ENCODE measurements at regions of chr17 and their contacts with region 1.

Region 1: GRCh38 chr17:20009302-20010098 is at the start of gene SPECC1:
- DNase-seq: peak; percentile 84
- H3K4me3 Mint-ChIP-seq: peak within 1 kb of the TSS; percentile 92
- H3K27ac Mint-ChIP-seq: peak within 1 kb of the TSS; percentile 65
- H3K4me1 Mint-ChIP-seq: peaks cover 15% of the 10 kb centered on the region
- H3K27me3 Mint-ChIP-seq: peaks cover 70% of the 10 kb centered on the region
- total RNA-seq, gene SPECC1: 7.2 and 11.1 TPM in 2 replicates

Region 2: GRCh38 chr17:19706791-19707727 is 302.4 kb before region 1 on chr17:
- intact Hi-C with region 1: no loop called
- DNase-seq: no peak
- H3K4me3 Mint-ChIP-seq: no peak overlapping the region
- H3K27ac Mint-ChIP-seq: no peak overlapping the region
- H3K4me1 Mint-ChIP-seq: no peaks in the 10 kb centered on the region
- H3K27me3 Mint-ChIP-seq: no peaks in the 10 kb centered on the region

Region 3: GRCh38 chr17:19977311-19978208 is 31.9 kb before region 1 on chr17 and contains the start of gene AKAP10:
- intact Hi-C with region 1: loop called (anchors 1 kb)
- DNase-seq: peak; percentile 88
- H3K4me3 Mint-ChIP-seq: peak within 1 kb of the TSS; percentile 91
- H3K27ac Mint-ChIP-seq: peak within 1 kb of the TSS; percentile 94
- H3K4me1 Mint-ChIP-seq: peaks cover 42% of the 10 kb centered on the region
- H3K27me3 Mint-ChIP-seq: no peaks in the 10 kb centered on the region
- total RNA-seq, gene AKAP10: 38.8 and 39.3 TPM in 2 replicates

Region 4: GRCh38 chr17:20141198-20141972 is 131.9 kb after region 1 on chr17:
- intact Hi-C with region 1: no loop called
- DNase-seq: no peak
- H3K4me3 Mint-ChIP-seq: no peak overlapping the region
- H3K27ac Mint-ChIP-seq: no peak overlapping the region
- H3K4me1 Mint-ChIP-seq: no peaks in the 10 kb centered on the region
- H3K27me3 Mint-ChIP-seq: peaks cover 8% of the 10 kb centered on the region